ENCODE measurements at regions of chr3 and their contacts with region 1.

Region 1: DNA sequence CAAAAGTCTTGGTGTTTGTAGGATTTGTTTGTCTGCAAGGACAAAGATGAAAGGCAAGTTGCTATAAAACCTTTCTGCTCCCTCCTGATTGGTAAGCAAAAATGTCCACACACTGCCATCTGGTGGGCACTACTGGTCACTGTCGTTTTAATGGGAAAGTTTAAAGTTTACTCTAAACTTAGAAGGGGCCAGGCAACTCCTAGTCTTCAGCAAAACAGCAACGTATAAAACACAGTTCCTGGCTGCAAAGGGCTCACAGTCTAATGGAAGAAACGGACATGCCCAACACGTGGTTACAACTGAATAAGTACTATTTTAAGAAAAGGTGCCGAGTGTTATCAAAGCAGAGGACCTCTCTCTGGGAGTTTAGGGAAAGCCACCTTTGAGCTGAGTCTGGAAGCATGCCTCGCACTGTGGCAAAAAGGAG is 23.7 kb upstream of the TPRG1 start:
- DNase-seq: peak; percentile 67
- ATAC-seq: peak; percentile 91
- H3K4me3 ChIP-seq: no peak overlapping the region
- H3K27ac ChIP-seq: no peak overlapping the region
- H3K4me1 ChIP-seq: 0 out of 2 replicates have a peak, but pooled peaks cover 3% of the 10 kb centered on the region
- H3K27me3 ChIP-seq: peaks cover 9% of the 10 kb centered on the region
- CTCF ChIP-seq: peak; percentile 81
- POLR2A ChIP-seq: no peak
- RAD21 ChIP-seq: peak; percentile 79

Region 2: GRCh38 chr3:188468662-188469061 is 679.4 kb before region 1 on chr3:
- CTCF ChIA-PET with region 1: no interaction called
- POLR2A ChIA-PET with region 1: no interaction called
- dilution Hi-C with region 1: no loop called
- in situ Hi-C with region 1: loop called (anchors 25 kb)
- intact Hi-C with region 1: no loop called
- DNase-seq: no peak
- ATAC-seq: no peak
- H3K4me3 ChIP-seq: no peak overlapping the region
- H3K27ac ChIP-seq: no peak overlapping the region
- H3K4me1 ChIP-seq: peaks cover 6% of the 10 kb centered on the region; the same call in 1 of the 2 replicates
- H3K27me3 ChIP-seq: no peaks in the 10 kb centered on the region
- CTCF ChIP-seq: no peak
- POLR2A ChIP-seq: no peak
- RAD21 ChIP-seq: no peak

Region 3: DNA sequence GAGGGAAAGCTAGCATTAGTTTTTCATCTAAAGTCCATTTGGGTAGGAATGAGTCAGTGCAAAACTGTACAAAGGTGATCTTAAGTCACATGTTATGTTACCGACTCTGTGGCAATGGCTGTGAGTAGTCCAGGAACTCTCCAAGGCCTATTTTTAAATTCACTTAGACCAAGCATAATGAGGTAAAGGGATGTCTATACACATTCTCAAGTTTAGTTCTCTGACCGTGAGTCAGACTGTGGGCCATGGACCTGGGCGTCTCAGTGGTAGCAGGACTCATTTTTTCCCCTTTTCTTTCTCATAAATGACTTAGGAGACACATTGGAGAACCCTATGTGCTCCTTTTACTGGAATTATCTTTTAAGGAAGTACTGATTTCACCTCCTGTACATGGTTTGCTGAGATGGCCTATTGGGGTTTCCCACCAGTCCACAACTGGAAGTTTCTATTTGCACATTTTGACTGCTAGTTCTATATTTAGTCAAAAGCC is 465.0 kb before region 1 on chr3:
- CTCF ChIA-PET with region 1: no interaction called
- POLR2A ChIA-PET with region 1: no interaction called
- dilution Hi-C with region 1: no loop called
- in situ Hi-C with region 1: no loop called
- intact Hi-C with region 1: loop called (anchors 10 kb)
- DNase-seq: peak; percentile 99
- ATAC-seq: peak; percentile 91
- H3K4me3 ChIP-seq: no peak overlapping the region
- H3K27ac ChIP-seq: no peak overlapping the region
- H3K4me1 ChIP-seq: peaks cover 16% of the 10 kb centered on the region
- H3K27me3 ChIP-seq: no peaks in the 10 kb centered on the region
- CTCF ChIP-seq: no peak
- POLR2A ChIP-seq: no peak
- RAD21 ChIP-seq: no peak

Measured in IMR-90 (cell line).